Posterior vena cava (tissue), 2 donors: ENCODE measurements at regions of chr5 and their contacts with region 1.

Region 1: DNA sequence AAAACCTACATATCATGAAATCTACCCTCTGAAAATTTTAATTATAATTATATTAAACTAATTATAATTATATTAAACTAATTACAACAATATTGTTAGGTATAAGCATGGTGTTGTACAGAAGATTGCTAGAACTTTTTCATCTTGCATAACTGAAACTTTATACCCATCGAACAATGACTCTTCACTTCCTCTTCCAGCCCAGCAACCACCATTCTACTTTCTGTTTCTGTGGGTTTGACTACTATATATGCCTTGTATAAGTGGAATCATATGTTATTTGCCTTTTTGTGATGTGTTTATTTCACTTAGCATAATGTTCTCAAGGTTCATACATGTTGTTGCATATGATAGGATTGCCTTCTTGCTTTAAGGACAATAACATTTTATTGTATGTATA is 274.2 kb upstream of the CCNH start:
- DNase-seq: no peak

Region 2: DNA sequence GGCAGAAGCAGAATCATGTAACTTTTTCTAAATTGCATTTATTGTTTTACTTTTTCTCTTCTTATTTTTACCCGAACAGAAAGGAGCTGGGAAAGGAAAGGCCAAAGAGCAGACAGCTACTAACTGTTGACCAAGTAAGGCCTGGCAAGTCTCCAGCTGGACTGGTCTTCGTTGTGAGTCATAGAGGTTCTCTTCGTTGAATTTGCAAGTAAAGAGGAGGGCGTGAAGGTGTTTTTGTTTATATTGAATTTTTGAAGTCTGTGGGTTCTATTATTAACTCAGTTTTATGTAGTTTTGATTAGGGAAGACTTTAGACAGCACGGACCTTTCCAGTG is 142.2 kb after region 1 on chr5:
- intact Hi-C with region 1: loop called in 1 of 2 experiments (anchors 5 kb)
- DNase-seq: peak; percentile 81